Dendritic cell treated with granulocyte-macrophage colony-stimulating factor and Interleukin-4, amounts not matched to agents 40 ng/mL and 50 ng/mL, for 4 days (primary cell): ENCODE measurements at regions of chr11 and their contacts with region 1.

Region 1: GRCh38 chr11:60951899-60952741 is at the start of gene SLC15A3:
- H3K4me3 Mint-ChIP-seq: peak within 1 kb of the TSS; percentile 97
- H3K27ac Mint-ChIP-seq: peak within 1 kb of the TSS; percentile 99
- H3K4me1 Mint-ChIP-seq: peaks cover 67% of the 10 kb centered on the region
- H3K27me3 Mint-ChIP-seq: peaks cover 3% of the 10 kb centered on the region

Region 2: DNA sequence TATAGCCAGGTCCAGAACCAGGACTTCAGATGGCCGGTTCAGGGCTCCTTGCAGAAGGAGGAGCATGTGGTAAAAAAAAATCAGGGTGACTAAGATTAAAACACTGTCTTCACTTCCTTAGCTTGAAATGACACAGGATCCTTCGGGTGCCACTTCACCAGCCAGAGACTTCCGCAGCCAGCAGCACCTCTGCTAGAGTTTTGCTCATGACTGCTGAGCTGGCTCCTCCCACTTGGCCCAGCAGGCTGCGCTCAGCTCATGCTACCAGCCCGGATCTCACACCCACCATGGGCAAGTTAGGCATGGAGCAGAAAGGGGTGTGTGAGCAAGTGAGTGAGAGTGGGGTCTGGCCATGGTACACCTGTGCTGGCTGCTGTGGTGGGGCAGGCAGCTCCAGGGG is 234.2 kb before region 1 on chr11:
- intact Hi-C with region 1: no loop called
- H3K4me3 Mint-ChIP-seq: no peak overlapping the region
- H3K27ac Mint-ChIP-seq: no peak overlapping the region
- H3K4me1 Mint-ChIP-seq: no peaks in the 10 kb centered on the region
- H3K27me3 Mint-ChIP-seq: peaks cover 9% of the 10 kb centered on the region

Region 3: DNA sequence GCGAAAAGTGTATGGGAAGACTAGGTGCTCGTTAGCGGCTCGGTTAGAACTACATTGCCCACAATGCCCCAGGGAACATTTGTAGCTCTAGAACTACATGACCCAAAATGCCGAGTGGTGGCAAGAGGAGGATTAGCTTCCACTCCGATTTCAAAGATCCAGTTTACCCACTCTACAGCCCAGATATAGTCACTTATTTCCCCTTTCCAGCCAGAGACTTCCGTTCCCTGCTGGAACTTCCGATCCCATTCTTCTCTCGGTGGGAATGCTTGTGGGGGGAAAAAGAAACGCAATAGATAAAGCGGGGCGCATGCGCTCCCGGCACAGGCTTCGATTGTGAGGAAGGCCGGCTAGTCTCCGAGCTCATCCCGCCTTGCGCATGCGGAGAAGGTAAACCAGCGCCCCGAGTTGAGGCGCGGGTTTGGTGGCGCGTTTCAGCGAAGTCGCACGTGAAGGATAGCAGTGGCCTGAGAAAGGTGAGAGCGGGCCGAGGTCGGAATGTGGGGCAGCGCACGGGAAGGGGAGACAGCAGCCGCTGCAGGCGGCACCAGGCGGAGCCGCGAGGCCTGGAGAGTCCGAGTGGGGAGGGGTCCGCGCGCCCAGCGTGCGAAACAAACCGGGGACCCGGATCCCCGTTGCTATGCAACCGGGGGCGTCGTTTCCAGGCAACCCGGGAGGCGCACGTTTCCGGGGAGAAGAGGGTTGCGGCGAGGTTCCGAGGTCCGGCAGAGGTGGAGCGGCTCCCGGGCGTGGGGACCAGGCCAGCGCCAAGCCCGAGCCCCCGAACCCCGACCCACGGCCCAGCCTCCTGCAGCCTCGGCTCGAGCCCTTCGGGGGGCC is 38.1 kb before region 1 on chr11 and contains the start of gene TMEM109:
- intact Hi-C with region 1: loop called (anchors 5 kb)
- H3K4me3 Mint-ChIP-seq: peak within 1 kb of the TSS; percentile 100
- H3K27ac Mint-ChIP-seq: peak within 1 kb of the TSS; percentile 95
- H3K4me1 Mint-ChIP-seq: peaks cover 83% of the 10 kb centered on the region
- H3K27me3 Mint-ChIP-seq: no peaks in the 10 kb centered on the region

Region 4: DNA sequence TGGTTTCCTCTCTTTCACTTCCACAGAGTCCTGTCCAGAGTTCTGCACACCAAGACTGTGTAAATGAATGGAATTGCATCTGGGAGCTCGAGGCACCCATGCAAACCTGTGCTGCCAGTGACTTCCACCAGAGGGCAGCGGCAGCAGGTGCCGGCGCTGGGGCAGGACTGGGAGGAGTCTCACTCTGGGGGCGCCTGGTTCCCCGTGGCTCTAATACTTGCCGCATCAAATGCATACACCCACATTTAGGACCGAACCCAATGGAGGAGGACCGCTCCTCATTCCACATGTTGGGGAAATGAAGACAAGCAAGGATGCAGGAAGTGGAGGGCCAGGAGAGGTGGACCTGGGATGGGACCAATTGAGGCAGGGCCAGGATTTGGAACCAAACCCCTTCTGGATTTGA is 18.3 kb after region 1 on chr11:
- intact Hi-C with region 1: loop called (anchors 2 kb)
- H3K4me3 Mint-ChIP-seq: no peak overlapping the region
- H3K27ac Mint-ChIP-seq: no peak overlapping the region
- H3K4me1 Mint-ChIP-seq: peaks cover 48% of the 10 kb centered on the region
- H3K27me3 Mint-ChIP-seq: peaks cover 36% of the 10 kb centered on the region

Region 5: GRCh38 chr11:61129639-61130523 is 177.8 kb after region 1 on chr11:
- intact Hi-C with region 1: loop called (anchors 5 kb)
- H3K4me3 Mint-ChIP-seq: peak overlapping the region; percentile 13
- H3K27ac Mint-ChIP-seq: peak overlapping the region; percentile 60
- H3K4me1 Mint-ChIP-seq: peaks cover 25% of the 10 kb centered on the region
- H3K27me3 Mint-ChIP-seq: no peaks in the 10 kb centered on the region